GM10248 (cell line): ENCODE measurements at regions of chr4 and their contacts with region 1.

Region 1: DNA sequence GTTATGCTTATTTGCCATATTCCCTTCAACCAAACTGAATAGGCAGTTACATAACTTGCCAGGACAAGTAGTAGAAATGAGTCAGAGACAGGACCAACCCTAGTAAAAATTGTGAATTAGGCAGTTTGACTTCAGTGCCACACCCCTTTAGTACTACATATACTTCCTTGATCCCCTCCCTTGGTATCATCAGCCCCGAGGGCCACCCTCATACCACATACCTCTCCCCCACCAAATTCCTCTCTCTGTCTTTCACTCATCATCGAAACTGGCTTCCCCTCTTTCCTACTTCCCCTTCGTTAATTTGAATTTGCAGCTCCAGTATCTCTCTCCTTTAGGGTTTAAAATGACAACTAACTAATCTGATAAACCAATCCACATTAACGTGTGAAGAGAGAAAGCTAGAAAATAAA is 7.9 kb upstream of the PTPN13 start:
- DNase-seq: no peak
- CTCF ChIP-seq: no peak

Region 2: GRCh38 chr4:86569103-86569870 is 16.9 kb before region 1 on chr4:
- CTCF ChIA-PET with region 1: interaction called, 10 read pairs
- POLR2A ChIA-PET with region 1: no interaction called
- DNase-seq: no peak
- CTCF ChIP-seq: no peak